Activated B cell treated with CpG ODN at 0.5 μM for 24 hours (primary cell): ENCODE measurements at regions of chr19 and their contacts with region 1.

Region 1: DNA sequence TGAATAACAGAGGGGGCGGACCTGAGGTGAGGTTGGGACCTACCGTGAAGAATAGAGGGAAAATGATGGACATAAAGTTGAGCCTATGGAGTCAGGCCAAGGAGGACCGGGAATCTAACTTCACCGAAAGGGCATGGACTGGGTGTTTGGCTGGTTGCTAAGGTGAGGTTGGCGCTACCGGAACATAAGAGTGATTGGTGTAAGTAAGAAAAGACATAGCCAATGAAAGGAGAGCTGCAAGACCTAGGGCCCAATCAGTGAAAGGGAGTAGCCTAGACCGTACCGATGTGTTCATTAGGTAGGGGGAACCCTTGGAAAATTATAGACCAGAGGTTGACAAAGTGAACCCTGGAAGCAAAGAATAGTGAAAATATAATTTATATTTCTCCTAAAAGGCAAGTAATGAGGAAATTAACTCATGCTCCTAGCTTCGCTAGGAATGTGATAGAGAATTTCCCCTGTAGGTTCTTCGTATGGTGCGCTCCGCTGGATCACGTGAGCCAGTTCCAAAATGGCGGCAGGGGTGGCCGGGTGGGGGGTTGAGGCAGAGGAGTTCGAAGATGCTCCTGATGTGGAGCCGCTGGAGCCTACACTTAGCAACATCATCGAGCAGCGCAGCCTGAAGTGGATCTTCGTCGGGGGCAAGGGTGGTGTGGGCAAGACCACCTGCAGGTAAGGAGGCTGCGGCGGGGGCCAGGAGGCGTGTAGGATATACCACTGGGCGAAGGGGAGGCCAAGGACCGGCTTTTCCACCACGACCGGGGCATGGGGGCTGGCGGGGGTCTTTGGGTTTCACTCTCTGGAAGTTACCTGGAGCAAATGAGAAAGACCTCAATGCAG is at the start of gene GET3:
- DNase-seq: peak; percentile 66
- ATAC-seq: peak; percentile 79
- H3K4me3 Mint-ChIP-seq: peak within 1 kb of the TSS; percentile 99
- H3K27ac Mint-ChIP-seq: peak within 1 kb of the TSS; percentile 95
- H3K4me1 Mint-ChIP-seq: peaks cover 40% of the 10 kb centered on the region
- H3K27me3 Mint-ChIP-seq: no peaks in the 10 kb centered on the region
- CTCF ChIP-seq: no peak
- total RNA-seq, gene GET3: 59.6 and 63.5 TPM in 2 replicates

Region 2: GRCh38 chr19:12722566-12723380 is 14.4 kb before region 1 on chr19:
- CTCF ChIA-PET with region 1: interaction called, 14 read pairs
- POLR2A ChIA-PET with region 1: interaction called, 121 read pairs
- intact Hi-C with region 1: loop called (anchors 1 kb)
- DNase-seq: peak; percentile 75
- ATAC-seq: peak; percentile 84
- H3K4me3 Mint-ChIP-seq: peak overlapping the region; percentile 92
- H3K27ac Mint-ChIP-seq: peak overlapping the region; percentile 90
- H3K4me1 Mint-ChIP-seq: peaks cover 43% of the 10 kb centered on the region
- H3K27me3 Mint-ChIP-seq: no peaks in the 10 kb centered on the region
- CTCF ChIP-seq: no peak

Region 3: DNA sequence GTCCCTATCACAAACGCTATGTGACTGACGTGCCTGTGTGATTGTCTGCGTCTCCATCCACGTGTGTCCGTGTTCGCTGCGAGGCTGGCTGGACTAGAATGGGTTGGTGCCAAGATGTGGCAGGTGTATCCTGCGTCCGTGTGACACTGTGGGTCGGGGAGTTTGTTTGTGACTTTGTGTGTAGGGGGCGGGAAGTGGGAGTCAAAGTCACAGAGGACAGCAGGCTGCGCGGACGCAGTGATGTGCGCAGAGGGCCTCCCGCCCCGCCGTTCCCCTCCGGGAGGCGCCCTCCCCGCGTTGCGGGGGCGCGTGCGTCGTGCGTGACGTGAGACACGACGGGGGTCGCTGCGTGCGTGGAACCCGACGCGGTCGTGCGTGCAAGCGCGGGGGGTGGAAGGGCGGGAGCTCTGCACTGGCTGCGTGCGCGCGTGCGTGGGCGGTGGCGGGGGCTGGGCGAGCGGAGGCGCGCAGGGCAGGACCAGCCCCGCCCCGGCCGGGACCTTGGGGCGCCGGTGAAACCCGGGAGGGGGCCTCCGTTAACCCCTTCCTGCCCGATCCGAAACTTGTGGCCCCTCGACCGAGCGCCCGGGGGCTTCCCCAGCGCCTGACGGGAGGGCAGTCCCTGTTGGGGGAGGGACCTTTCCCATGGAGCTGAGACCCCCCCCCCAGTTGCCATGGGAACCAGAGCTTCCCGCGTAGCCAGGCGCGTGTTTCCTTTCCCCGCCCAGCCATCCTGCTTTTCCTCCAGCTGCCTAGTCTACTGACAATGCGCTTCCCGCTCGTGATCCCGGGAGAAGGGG is 45.2 kb after region 1 on chr19:
- CTCF ChIA-PET with region 1: no interaction called
- POLR2A ChIA-PET with region 1: interaction called, 12 read pairs
- intact Hi-C with region 1: no loop called
- DNase-seq: peak; percentile 89
- ATAC-seq: peak; percentile 51
- H3K4me3 Mint-ChIP-seq: peak overlapping the region; percentile 86
- H3K27ac Mint-ChIP-seq: peak overlapping the region; percentile 98
- H3K4me1 Mint-ChIP-seq: peaks cover 44% of the 10 kb centered on the region
- H3K27me3 Mint-ChIP-seq: no peaks in the 10 kb centered on the region
- CTCF ChIP-seq: no peak

Region 4: GRCh38 chr19:12806239-12807081 is 69.2 kb after region 1 on chr19 and contains the start of gene RNASEH2A:
- CTCF ChIA-PET with region 1: no interaction called
- POLR2A ChIA-PET with region 1: interaction called, 5 read pairs
- intact Hi-C with region 1: loop called (anchors 1 kb)
- DNase-seq: peak; percentile 86
- ATAC-seq: peak; percentile 93
- H3K4me3 Mint-ChIP-seq: peak within 1 kb of the TSS; percentile 92
- H3K27ac Mint-ChIP-seq: peak within 1 kb of the TSS; percentile 86
- H3K4me1 Mint-ChIP-seq: peaks cover 23% of the 10 kb centered on the region
- H3K27me3 Mint-ChIP-seq: peaks cover 5% of the 10 kb centered on the region
- CTCF ChIP-seq: no peak
- total RNA-seq, gene RNASEH2A: 13.4 and 22.1 TPM in 2 replicates